PC-3 (cell line): ENCODE measurements at regions of chr3 and their contacts with region 1.

Region 1: GRCh38 chr3:125594581-125595011 is 701 bp downstream of the OSBPL11 start:
- DNase-seq: no peak
- ATAC-seq: peak; percentile 3; the same call in 1 of the 2 replicates
- H3K4me3 ChIP-seq: peak overlapping the region; percentile 94
- H3K27ac ChIP-seq: peak overlapping the region; percentile 34
- H3K4me1 ChIP-seq: no peaks in the 10 kb centered on the region
- H3K27me3 ChIP-seq: no peaks in the 10 kb centered on the region
- CTCF ChIP-seq: no peak

Region 2: GRCh38 chr3:124986158-124987143 is 608.1 kb before region 1 on chr3:
- CTCF ChIA-PET with region 1: no interaction called
- POLR2A ChIA-PET with region 1: interaction called, 15 read pairs
- intact Hi-C with region 1: no loop called
- DNase-seq: peak; percentile 89
- ATAC-seq: peak; percentile 73
- H3K4me3 ChIP-seq: no peak overlapping the region
- H3K27ac ChIP-seq: peak overlapping the region; percentile 77
- H3K4me1 ChIP-seq: peaks cover 25% of the 10 kb centered on the region
- H3K27me3 ChIP-seq: no peaks in the 10 kb centered on the region
- CTCF ChIP-seq: peak; percentile 78

Region 3: DNA sequence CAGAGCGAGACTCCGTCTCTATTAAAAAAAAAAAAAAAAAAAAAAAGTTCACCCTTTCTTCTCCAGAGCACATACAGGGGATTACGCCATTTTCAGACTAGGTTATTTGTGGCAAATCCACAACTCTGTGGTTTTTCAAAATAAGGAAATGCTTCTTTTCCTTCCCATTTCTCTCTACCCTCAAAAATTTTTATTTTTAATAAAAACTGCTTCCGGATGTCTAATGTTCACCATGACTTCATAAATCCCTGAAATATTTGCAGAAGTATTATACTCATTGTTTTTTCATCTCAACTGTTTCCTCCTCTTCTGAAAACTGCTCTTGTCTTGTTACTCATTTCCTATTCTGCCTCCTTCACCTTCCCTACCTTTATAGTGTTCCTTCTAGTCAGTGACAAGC is 337.1 kb before region 1 on chr3:
- CTCF ChIA-PET with region 1: no interaction called
- POLR2A ChIA-PET with region 1: no interaction called
- intact Hi-C with region 1: no loop called
- DNase-seq: no peak
- ATAC-seq: no peak
- H3K4me3 ChIP-seq: no peak overlapping the region
- H3K27ac ChIP-seq: no peak overlapping the region
- H3K4me1 ChIP-seq: no peaks in the 10 kb centered on the region
- H3K27me3 ChIP-seq: no peaks in the 10 kb centered on the region
- CTCF ChIP-seq: no peak

Region 4: DNA sequence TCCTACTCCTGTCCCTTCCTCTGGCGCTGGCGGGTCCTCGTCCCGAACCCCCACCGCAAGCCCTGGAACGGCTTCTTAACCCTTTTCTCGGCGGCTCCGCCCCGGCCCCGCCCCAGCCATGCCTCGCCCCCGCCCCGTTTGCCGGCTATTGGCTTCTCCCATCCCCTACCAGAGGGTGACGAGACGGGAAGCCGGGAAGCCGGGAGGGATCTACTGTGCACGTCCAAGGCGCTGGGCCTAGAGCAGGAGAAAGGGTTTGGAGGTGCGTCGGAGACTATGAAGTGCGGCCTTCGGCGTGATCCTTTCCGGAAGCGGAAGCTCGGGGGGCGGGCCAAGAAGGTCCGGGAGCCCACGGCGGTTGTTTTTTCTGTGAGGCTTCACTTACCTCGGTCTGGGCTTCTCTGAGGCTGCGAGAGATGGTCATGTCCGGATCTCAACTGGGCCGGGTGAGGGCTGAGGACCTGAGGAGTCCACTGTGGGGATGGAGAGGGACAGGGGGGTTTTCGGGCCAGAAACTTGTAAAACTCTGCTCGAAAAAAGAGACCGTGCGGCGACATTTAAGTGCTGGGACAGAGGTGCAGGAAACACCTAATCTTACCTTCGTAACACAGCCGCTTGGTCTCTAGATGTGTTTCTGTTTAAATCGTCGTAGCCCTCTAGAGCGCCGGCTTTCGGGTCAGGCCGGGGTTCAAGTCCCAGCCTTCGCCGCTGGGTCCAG is 395.8 kb after region 1 on chr3:
- CTCF ChIA-PET with region 1: no interaction called
- POLR2A ChIA-PET with region 1: interaction called, 32 read pairs
- intact Hi-C with region 1: no loop called
- DNase-seq: peak; percentile 81
- ATAC-seq: peak; percentile 98
- H3K4me3 ChIP-seq: peak overlapping the region; percentile 84
- H3K27ac ChIP-seq: 0 out of 2 replicates have a peak overlapping the region, but pooled peaks have one; percentile 19
- H3K4me1 ChIP-seq: peaks cover 9% of the 10 kb centered on the region; the same call in 1 of the 2 replicates
- H3K27me3 ChIP-seq: no peaks in the 10 kb centered on the region
- CTCF ChIP-seq: no peak

Region 5: GRCh38 chr3:127074728-127075360 is 1480.2 kb after region 1 on chr3:
- CTCF ChIA-PET with region 1: no interaction called
- POLR2A ChIA-PET with region 1: interaction called, 10 read pairs
- intact Hi-C with region 1: no loop called
- DNase-seq: peak; percentile 37
- ATAC-seq: peak; percentile 76
- H3K4me3 ChIP-seq: no peak overlapping the region
- H3K27ac ChIP-seq: no peak overlapping the region
- H3K4me1 ChIP-seq: no peaks in the 10 kb centered on the region
- H3K27me3 ChIP-seq: no peaks in the 10 kb centered on the region; the same call in 1 of the 2 replicates
- CTCF ChIP-seq: no peak